Vagina (tissue), 2 donors: ENCODE measurements at regions of chr20 and their contacts with region 1.

Region 1: GRCh38 chr20:58192567-58192966 is 35.9 kb downstream of the ANKRD60 start:
- DNase-seq: no peak
- H3K4me3 ChIP-seq: no peak overlapping the region
- H3K27ac ChIP-seq: no peak overlapping the region
- H3K4me1 ChIP-seq: no peaks in the 10 kb centered on the region
- H3K27me3 ChIP-seq: no peaks in the 10 kb centered on the region
- CTCF ChIP-seq: peak in 1 of 3 experiments; percentile 13
- POLR2A ChIP-seq: no peak

Region 2: GRCh38 chr20:57391074-57391554 is 801.5 kb before region 1 on chr20 and contains the start of gene RBM38:
- intact Hi-C with region 1: loop called (anchors 10 kb)
- DNase-seq: no peak
- H3K4me3 ChIP-seq: peak within 1 kb of the TSS; percentile 61 to 92
- H3K27ac ChIP-seq: peak within 1 kb of the TSS; percentile 68
- H3K4me1 ChIP-seq: peaks cover 55% of the 10 kb centered on the region
- H3K27me3 ChIP-seq: no peaks in the 10 kb centered on the region
- CTCF ChIP-seq: no peak
- POLR2A ChIP-seq: no peak
- total RNA-seq, gene RBM38: 24.8 TPM

Region 3: DNA sequence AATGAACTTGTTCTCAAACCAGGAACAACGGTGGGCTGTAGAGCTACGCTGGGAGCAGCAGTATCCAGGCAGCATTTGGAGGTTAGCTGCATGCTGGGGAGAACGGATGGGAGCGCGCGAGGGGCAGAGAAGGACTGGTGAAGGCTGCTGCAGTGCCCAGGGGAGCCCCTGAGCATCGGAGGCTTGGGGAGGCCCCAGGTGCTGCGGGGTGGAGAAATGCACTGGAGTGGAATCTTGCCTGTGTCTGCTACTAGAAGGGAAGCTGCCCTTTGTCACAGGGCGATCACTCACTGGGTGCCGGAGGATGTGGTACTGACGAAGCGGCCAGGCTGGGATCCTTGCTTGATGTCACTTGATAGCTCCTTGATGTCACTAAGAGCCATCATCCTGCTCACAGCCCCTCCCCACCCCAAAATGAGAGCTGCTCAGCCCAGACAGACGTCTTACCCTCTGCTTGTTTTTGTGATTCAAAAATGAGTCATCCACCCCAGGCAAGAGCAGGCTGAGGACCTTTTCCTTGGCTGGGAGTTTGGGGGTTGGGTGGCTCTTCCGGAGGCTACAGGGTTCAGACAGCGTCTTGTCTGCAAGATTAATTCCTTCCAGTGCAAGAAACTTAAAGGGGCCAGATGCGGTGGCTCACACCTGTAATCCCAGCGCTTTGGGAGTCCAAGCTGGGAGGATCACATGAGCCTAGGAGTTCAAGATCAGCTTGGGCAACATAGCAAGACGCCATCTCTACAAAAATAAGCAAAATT is 420.1 kb before region 1 on chr20:
- intact Hi-C with region 1: loop called (anchors 10 kb)
- DNase-seq: no peak
- H3K4me3 ChIP-seq: no peak overlapping the region
- H3K27ac ChIP-seq: no peak overlapping the region
- H3K4me1 ChIP-seq: peaks cover 5% of the 10 kb centered on the region
- H3K27me3 ChIP-seq: no peaks in the 10 kb centered on the region
- CTCF ChIP-seq: no peak
- POLR2A ChIP-seq: no peak